GM12878 (cell line): ENCODE measurements at regions of chr1 and their contacts with region 1.

Region 1: GRCh38 chr1:58515794-58516401 is 30.6 kb downstream of the OMA1 start:
- DNase-seq: peak; percentile 13
- ATAC-seq: peak; percentile 63
- H3K4me3 ChIP-seq: no peak overlapping the region
- H3K27ac ChIP-seq: no peak overlapping the region
- H3K4me1 ChIP-seq: no peaks in the 10 kb centered on the region
- H3K27me3 ChIP-seq: no peaks in the 10 kb centered on the region
- CTCF ChIP-seq: peak; percentile 47 to 72 (median 59); a peak in 5 of 6 replicates
- EP300 ChIP-seq: no peak
- POLR2A ChIP-seq: no peak
- RAD21 ChIP-seq: peak; percentile 88

Region 2: DNA sequence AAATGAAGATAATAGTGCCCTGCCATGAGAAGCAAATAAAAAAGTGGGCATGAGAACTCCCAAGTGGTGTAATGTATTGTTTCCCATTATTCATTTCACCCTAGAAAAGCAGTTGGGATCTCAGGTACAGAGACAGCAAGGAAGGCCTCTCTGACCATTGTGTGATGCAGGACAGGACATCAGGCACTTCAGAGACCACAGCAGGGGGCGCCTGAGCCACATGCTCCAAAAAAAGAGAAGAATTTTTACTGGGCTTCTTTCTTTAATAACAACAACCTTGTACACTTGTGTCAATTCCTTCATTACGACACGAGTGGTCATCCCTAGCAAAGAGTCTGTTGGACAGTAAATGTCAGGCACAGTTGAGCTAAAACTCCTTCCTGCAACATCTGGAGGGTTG is 502.7 kb before region 1 on chr1:
- CTCF ChIA-PET with region 1: interaction called, 15 read pairs
- POLR2A ChIA-PET with region 1: no interaction called
- RAD21 ChIA-PET with region 1: no interaction called
- SMC1A ChIA-PET with region 1: interaction called, 3 read pairs
- in situ Hi-C with region 1: no loop called
- intact Hi-C with region 1: no loop called
- DNase-seq: no peak
- ATAC-seq: peak; percentile 36; the same call in 1 of the 3 replicates
- H3K4me3 ChIP-seq: no peak overlapping the region
- H3K27ac ChIP-seq: no peak overlapping the region
- H3K4me1 ChIP-seq: no peaks in the 10 kb centered on the region
- H3K27me3 ChIP-seq: no peaks in the 10 kb centered on the region
- CTCF ChIP-seq: peak; percentile 8 to 35 (median 25); a peak in 3 of 6 replicates
- EP300 ChIP-seq: no peak
- POLR2A ChIP-seq: no peak
- RAD21 ChIP-seq: peak; percentile 42

Region 3: DNA sequence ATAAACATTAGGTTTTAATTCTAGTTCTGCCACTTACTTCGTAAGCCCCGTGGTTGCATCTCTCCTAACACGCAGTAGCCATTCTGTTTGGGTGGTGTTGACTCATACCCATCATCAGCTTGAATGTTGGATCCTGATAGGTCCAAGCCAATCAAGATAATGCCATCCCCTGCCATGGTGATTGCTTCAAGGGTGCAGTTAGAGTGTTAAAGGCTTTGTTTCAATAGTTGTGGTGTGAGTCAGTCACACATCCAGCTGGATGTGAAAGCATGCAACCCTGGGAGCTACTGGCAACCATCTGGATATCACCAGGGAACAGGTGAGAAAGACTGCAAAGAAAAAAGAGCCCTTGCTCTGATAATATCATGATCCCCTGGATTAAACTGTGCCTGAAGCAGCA is 38.5 kb before region 1 on chr1:
- CTCF ChIA-PET with region 1: no interaction called
- POLR2A ChIA-PET with region 1: no interaction called
- RAD21 ChIA-PET with region 1: no interaction called
- SMC1A ChIA-PET with region 1: no interaction called
- in situ Hi-C with region 1: no loop called
- intact Hi-C with region 1: no loop called
- DNase-seq: no peak
- ATAC-seq: no peak
- H3K4me3 ChIP-seq: no peak overlapping the region
- H3K27ac ChIP-seq: no peak overlapping the region
- H3K4me1 ChIP-seq: no peaks in the 10 kb centered on the region
- H3K27me3 ChIP-seq: no peaks in the 10 kb centered on the region
- CTCF ChIP-seq: no peak
- EP300 ChIP-seq: no peak
- POLR2A ChIP-seq: no peak
- RAD21 ChIP-seq: no peak

Region 4: DNA sequence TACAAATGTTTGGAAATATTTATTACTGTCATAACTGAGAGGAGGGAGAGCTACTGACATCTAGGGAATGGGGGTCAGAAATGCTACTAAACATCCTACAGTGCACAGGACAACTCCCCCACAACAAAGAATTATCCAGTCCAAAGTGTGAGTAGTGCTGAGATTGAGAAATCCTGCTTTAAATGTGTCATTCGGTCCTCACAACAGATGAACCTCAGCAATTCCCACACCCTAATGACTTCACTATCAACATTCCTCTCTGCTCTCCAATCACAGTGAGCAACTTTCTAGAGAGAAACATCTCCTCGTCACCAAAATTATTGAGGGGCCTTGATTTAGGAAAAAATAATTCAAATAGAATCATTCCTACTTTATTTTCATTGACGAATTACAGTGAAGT is 12.6 kb after region 1 on chr1:
- CTCF ChIA-PET with region 1: interaction called, 39 read pairs
- POLR2A ChIA-PET with region 1: no interaction called
- RAD21 ChIA-PET with region 1: no interaction called
- SMC1A ChIA-PET with region 1: interaction called, 41 read pairs
- in situ Hi-C with region 1: no loop called
- intact Hi-C with region 1: no loop called
- DNase-seq: no peak
- ATAC-seq: no peak
- H3K4me3 ChIP-seq: no peak overlapping the region
- H3K27ac ChIP-seq: no peak overlapping the region
- H3K4me1 ChIP-seq: no peaks in the 10 kb centered on the region
- H3K27me3 ChIP-seq: no peaks in the 10 kb centered on the region
- CTCF ChIP-seq: no peak
- EP300 ChIP-seq: no peak
- POLR2A ChIP-seq: no peak
- RAD21 ChIP-seq: no peak

Region 5: DNA sequence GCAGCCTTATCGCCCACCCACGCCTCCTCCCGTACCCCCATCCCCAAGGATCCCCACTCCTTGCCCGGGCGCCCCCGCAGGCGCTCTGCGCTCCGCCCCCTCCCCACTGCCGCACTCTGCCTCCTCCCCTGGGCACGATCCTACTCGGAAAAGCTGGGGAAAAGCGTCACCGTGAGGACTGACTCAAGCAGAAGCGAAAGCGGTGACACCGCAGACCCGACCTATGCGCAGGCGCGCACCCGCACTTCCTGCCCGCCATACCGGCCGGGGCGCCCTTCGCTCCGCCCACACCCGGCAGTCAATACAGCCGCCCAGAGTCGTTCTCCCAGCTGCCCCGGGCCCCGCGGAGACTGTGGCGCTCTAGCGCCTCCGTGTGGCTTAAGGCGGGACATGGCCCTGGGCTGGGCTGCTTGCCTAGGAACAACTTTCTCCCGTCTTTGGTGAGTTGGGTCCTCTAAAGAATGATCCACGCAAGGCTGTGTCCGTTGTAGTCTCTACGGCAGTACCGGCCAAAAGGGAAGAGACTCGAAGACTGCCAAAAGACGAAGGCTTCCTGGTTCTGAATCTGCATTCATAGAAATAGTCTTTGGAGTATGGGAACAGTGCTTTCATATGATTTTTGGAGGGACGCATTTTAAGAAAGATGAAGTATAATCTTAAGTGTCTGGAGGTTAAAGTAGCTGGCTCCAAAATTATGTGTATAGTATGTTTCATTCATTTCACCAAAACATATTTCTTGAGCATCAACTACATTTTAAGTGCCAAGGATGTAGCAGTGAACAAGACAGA is 30.8 kb after region 1 on chr1 and contains the start of gene OMA1:
- CTCF ChIA-PET with region 1: interaction called, 71 read pairs
- POLR2A ChIA-PET with region 1: no interaction called
- RAD21 ChIA-PET with region 1: interaction called, 35 read pairs
- SMC1A ChIA-PET with region 1: interaction called, 42 read pairs
- in situ Hi-C with region 1: no loop called
- intact Hi-C with region 1: loop called (anchors 1 kb)
- DNase-seq: peak; percentile 83
- ATAC-seq: peak; percentile 97
- H3K4me3 ChIP-seq: peak within 1 kb of the TSS; percentile 93
- H3K27ac ChIP-seq: peak within 1 kb of the TSS; percentile 67
- H3K4me1 ChIP-seq: no peaks in the 10 kb centered on the region
- H3K27me3 ChIP-seq: no peaks in the 10 kb centered on the region
- CTCF ChIP-seq: peak; percentile 98 to 99 (median 98); a peak in 5 of 6 replicates
- EP300 ChIP-seq: no peak
- POLR2A ChIP-seq: peak; percentile 98
- RAD21 ChIP-seq: peak; percentile 94
- polyA plus RNA-seq, gene OMA1: 48.3 to 53.4 TPM

Region 6: DNA sequence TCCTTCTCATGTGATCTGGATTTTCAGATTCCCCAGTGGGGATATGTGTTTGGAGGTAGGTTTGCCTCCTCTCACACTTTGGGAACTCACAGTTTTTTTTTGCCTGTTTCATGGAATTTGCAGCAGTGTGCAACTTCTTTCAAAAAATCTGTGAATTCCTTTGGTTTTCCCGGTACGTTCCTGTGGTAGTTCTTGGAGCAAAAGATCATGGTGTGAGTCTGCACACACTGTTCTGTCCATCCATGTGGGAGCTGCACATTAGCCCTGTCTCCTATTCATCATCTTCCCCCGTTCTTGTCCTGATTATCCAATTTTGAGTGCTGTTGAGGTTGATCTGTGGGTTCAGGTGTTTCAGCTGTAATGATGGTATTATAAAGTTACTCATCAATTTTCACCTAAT is 91.5 kb after region 1 on chr1:
- CTCF ChIA-PET with region 1: no interaction called
- POLR2A ChIA-PET with region 1: no interaction called
- RAD21 ChIA-PET with region 1: no interaction called
- SMC1A ChIA-PET with region 1: no interaction called
- in situ Hi-C with region 1: no loop called
- intact Hi-C with region 1: no loop called
- DNase-seq: no peak
- ATAC-seq: no peak
- H3K4me3 ChIP-seq: no peak overlapping the region
- H3K27ac ChIP-seq: no peak overlapping the region
- H3K4me1 ChIP-seq: no peaks in the 10 kb centered on the region
- H3K27me3 ChIP-seq: no peaks in the 10 kb centered on the region; a peak in 1 of 4 replicates
- CTCF ChIP-seq: no peak
- EP300 ChIP-seq: no peak
- POLR2A ChIP-seq: no peak
- RAD21 ChIP-seq: no peak

Region 7: GRCh38 chr1:59759156-59759925 is 1243.4 kb after region 1 on chr1:
- CTCF ChIA-PET with region 1: interaction called, 18 read pairs
- POLR2A ChIA-PET with region 1: no interaction called
- RAD21 ChIA-PET with region 1: interaction called, 3 read pairs
- SMC1A ChIA-PET with region 1: interaction called, 10 read pairs
- in situ Hi-C with region 1: loop called (anchors 5 kb)
- intact Hi-C with region 1: loop called (anchors 5 kb)
- DNase-seq: peak; percentile 46
- ATAC-seq: peak; percentile 98
- H3K4me3 ChIP-seq: no peak overlapping the region
- H3K27ac ChIP-seq: no peak overlapping the region
- H3K4me1 ChIP-seq: no peaks in the 10 kb centered on the region
- H3K27me3 ChIP-seq: no peaks in the 10 kb centered on the region
- CTCF ChIP-seq: peak; percentile 91 to 97 (median 96)
- EP300 ChIP-seq: no peak
- POLR2A ChIP-seq: no peak
- RAD21 ChIP-seq: peak; percentile 98